ENCODE measurements at regions of chr5 and their contacts with region 1.

Region 1: DNA sequence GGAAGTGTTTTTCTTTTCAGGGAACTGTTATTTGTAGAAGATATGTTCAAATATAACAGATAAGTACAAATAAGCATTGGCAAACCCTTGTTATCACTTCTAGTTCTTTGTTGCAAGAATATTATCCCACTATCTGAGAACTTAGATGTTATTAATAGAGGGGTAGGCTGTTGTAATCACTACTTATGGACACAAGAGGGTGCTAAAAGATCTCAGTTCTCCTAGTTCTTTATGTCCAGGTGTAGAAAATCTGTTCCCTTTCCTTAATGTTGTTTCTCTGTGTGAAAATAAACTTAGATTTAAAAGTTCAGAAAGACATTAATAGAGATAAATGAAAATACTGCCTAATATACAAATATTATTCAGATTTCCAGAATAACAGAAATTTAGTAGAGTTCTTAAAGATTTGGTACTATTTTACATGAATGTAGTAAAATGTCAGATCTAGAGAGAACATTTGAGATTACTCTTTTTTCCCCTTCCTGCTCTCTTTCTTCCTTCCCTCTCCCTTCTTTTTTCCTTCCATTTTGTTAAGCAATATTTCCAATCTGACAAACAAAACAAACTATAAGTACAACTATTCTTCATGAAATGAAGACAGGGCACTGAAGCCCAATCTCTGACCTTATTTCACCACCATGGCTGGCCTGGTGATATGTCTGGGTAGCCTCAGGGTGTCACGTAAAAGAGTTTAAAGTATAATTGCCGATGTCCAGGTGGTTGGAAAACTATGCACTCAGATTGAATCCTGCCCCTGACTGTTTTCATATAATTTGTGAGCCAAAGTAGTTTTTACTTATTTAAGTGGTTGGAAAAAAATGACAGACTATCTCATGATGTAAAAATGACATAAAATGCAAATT is 43.6 kb upstream of the C5orf46 start:
- DNase-seq: peak; percentile 85
- ATAC-seq: peak; percentile 93
- H3K4me3 ChIP-seq: no peak overlapping the region
- H3K27ac ChIP-seq: no peak overlapping the region
- H3K4me1 ChIP-seq: no peaks in the 10 kb centered on the region
- H3K27me3 ChIP-seq: no peaks in the 10 kb centered on the region
- CTCF ChIP-seq: peak; percentile 96

Region 2: GRCh38 chr5:148029131-148029530 is 79.2 kb after region 1 on chr5:
- CTCF ChIA-PET with region 1: no interaction called
- POLR2A ChIA-PET with region 1: no interaction called
- intact Hi-C with region 1: no loop called
- DNase-seq: no peak
- ATAC-seq: no peak
- H3K4me3 ChIP-seq: no peak overlapping the region
- H3K27ac ChIP-seq: no peak overlapping the region
- H3K4me1 ChIP-seq: peaks cover 6% of the 10 kb centered on the region; the same call in 1 of the 2 replicates
- H3K27me3 ChIP-seq: no peaks in the 10 kb centered on the region
- CTCF ChIP-seq: no peak

Region 3: DNA sequence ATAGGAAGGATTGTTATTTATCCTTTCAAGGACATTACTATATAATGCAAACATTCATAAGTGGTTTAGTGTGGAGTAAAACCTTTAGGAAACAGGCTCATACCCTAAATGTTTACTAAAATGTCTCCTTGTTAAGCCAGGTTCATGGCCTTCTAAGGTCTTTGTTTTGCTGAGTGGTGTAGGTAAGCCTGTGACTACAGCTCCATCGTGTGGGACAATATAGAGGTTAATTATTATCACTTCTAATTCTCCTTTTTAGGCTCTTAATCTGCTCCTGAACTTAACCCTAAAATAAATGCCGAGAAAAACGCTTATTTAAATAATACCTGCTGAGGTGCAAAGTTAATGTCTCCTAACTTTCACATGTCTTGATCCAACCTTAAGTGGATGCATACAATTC is 157.7 kb after region 1 on chr5:
- CTCF ChIA-PET with region 1: interaction called, 4 read pairs
- POLR2A ChIA-PET with region 1: no interaction called
- intact Hi-C with region 1: loop called (anchors 1 kb)
- DNase-seq: peak; percentile 69
- ATAC-seq: peak; percentile 67
- H3K4me3 ChIP-seq: no peak overlapping the region
- H3K27ac ChIP-seq: no peak overlapping the region
- H3K4me1 ChIP-seq: 0 out of 2 replicates have a peak, but pooled peaks cover 5% of the 10 kb centered on the region
- H3K27me3 ChIP-seq: no peaks in the 10 kb centered on the region
- CTCF ChIP-seq: peak; percentile 80

Region 4: DNA sequence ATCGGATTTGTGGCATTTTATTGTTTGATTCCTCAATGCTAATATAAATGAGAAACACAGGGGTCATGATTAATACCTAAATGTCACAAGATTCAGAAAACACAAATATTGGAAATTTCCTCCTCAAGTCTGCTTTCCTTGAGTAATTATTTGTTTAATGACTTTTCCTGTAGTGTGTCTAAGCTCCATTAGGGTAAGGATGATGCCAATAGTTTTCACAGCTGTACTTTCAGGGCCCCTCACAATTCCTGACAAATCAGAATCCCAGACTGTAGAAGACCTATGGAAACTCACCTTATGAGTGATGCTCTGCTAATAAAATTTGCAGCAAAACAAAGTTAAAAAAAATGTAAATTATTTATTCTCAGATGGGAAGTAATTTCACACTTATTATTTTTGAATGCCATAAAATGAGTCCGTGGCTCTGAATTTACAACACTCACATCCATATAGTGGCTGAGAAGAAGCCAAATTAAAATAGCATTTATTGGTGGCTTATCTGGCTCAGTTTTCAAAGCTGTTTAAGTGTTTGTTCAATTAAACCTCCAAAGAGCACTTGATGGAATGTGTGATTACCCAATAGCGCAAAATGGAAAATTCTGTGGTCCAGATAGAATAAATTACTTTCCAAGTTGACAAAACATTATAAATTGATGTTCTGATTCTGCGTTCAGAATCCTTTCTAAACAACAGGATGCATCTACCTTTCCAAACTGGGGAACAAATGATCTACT is 216.8 kb after region 1 on chr5:
- CTCF ChIA-PET with region 1: no interaction called
- POLR2A ChIA-PET with region 1: no interaction called
- intact Hi-C with region 1: loop called (anchors 2 kb)
- DNase-seq: no peak
- ATAC-seq: peak; percentile 70
- H3K4me3 ChIP-seq: no peak overlapping the region
- H3K27ac ChIP-seq: no peak overlapping the region
- H3K4me1 ChIP-seq: peaks cover 15% of the 10 kb centered on the region
- H3K27me3 ChIP-seq: no peaks in the 10 kb centered on the region
- CTCF ChIP-seq: no peak

Region 5: GRCh38 chr5:148353634-148354033 is 403.7 kb after region 1 on chr5:
- CTCF ChIA-PET with region 1: no interaction called
- POLR2A ChIA-PET with region 1: no interaction called
- intact Hi-C with region 1: loop called (anchors 5 kb)
- DNase-seq: peak; percentile 51
- ATAC-seq: peak; percentile 43; the same call in 1 of the 2 replicates
- H3K4me3 ChIP-seq: no peak overlapping the region
- H3K27ac ChIP-seq: no peak overlapping the region
- H3K4me1 ChIP-seq: peaks cover 10% of the 10 kb centered on the region
- H3K27me3 ChIP-seq: no peaks in the 10 kb centered on the region
- CTCF ChIP-seq: peak; percentile 68

Measured in PC-3 (cell line).